Activated T-helper 2 cell treated with anti-CD3 and anti-CD28 coated beads, Interferon-gamma antibody, Interleukin-2, Interleukin-4, amounts not matched to agents 10 μg/mL and 5 μg/mL and 100 μg/mL, durations not matched to agents 14 hours and 24 hours and 36 hours (primary cell): ENCODE measurements at regions of chr10 and their contacts with region 1.

Region 1: DNA sequence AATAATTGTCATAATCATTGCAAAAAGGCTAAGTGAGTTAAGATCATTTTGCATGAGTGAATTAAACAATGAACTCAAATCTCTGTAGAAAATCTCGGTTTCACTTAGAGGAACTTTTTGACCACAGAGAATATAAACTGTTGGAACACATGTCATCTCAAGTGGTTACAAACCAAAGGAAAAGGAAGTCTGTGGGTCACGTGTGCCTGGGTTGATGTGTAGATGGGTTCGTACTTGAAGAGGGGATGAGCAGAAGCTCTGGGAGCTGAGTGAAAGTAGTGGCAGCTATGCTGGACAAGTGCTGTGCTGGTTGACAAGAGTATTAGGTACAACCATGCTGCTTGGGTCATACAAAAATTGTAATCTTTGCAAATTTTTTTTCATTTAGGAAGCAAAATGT is 35.0 kb downstream of the GLRX3 start:
- DNase-seq: peak; percentile 58
- H3K4me3 Mint-ChIP-seq: peak overlapping the region; percentile 5
- H3K27ac Mint-ChIP-seq: no peak overlapping the region
- H3K4me1 Mint-ChIP-seq: peaks cover 69% of the 10 kb centered on the region
- H3K27me3 Mint-ChIP-seq: no peaks in the 10 kb centered on the region

Region 2: DNA sequence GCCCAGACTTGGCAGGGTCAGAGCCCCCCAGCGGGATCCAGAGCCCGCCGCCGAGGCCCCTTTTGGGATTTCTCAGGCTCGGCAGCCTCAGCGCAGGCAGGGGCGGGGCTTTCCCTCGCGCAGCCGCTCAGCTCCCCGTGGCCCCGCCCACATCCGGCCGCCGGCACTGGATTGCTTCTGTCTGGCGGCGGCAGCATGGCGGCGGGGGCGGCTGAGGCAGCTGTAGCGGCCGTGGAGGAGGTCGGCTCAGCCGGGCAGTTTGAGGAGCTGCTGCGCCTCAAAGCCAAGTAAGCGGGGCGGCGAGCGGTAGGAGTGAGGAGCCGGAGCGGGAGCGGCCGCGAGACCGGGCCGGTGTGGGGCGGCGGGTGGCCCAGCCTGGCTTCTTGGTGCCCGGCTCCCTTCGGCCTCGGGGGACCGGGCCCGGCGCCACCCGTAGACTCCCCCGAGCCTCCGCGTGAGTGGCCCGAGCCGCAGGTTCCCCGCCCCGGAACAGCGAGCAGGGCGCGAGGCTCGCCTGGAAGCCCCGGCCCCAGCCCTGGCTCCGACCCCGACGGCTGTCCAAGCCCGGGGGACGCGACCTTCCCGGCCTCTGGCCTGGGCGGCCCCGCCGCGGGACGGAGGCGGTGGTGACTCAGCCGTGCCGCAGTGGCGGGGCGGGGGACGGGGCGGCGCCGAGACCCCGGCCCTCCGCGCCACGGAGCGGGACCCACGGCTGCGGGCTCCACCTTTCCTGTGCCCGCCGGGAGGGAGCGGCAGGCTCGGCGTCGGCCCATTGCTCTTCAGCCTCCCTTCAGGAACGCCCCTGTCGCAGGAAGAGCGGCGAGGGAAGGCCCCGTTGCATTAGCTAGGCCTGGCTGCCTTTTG is 34.7 kb before region 1 on chr10 and contains the start of gene GLRX3:
- intact Hi-C with region 1: loop called (anchors 2 kb)
- DNase-seq: peak; percentile 81
- H3K4me3 Mint-ChIP-seq: peak within 1 kb of the TSS; percentile 92
- H3K27ac Mint-ChIP-seq: peak within 1 kb of the TSS; percentile 88
- H3K4me1 Mint-ChIP-seq: peaks cover 34% of the 10 kb centered on the region
- H3K27me3 Mint-ChIP-seq: no peaks in the 10 kb centered on the region
- total RNA-seq, gene GLRX3: 138 and 145 TPM in 2 replicates